Pancreas (tissue), 10 donors: ENCODE measurements at regions of chr16 and their contacts with region 1.

Region 1: DNA sequence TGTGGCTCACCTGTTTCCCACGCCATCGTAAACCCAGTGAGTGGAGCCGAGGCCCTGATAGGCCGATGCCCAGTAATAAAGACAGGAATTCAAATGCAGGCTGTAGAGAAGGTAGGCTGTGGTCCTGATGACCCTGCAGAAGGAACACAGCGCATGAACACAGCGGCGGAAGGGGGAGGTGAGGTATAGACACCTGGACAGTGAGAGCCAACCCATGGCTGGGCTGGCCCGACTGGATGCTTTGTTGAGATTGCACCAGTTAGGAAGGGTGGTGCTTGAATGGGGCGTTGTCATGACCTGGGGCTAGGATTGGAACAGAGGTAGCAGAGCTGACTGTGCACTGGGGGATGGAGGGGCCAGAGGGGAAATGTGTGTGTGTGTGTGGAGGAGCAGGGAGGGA is 59.2 kb downstream of the CNGB1 start:
- DNase-seq: no peak
- ATAC-seq: no peak
- H3K4me3 ChIP-seq: no peak overlapping the region
- H3K27ac ChIP-seq: no peak overlapping the region
- H3K4me1 ChIP-seq: no peaks in the 10 kb centered on the region
- H3K27me3 ChIP-seq: no peaks in the 10 kb centered on the region
- CTCF ChIP-seq: no peak

Region 2: GRCh38 chr16:57950382-57950781 is 38.6 kb after region 1 on chr16:
- intact Hi-C with region 1: loop called in 1 of 3 experiments (anchors 5 kb)
- DNase-seq: no peak
- ATAC-seq: no peak
- H3K4me3 ChIP-seq: no peak overlapping the region
- H3K27ac ChIP-seq: no peak overlapping the region
- H3K4me1 ChIP-seq: no peaks in the 10 kb centered on the region
- H3K27me3 ChIP-seq: no peaks in the 10 kb centered on the region
- CTCF ChIP-seq: no peak